ENCODE measurements at regions of chr13 and their contacts with region 1.

Region 1: GRCh38 chr13:109786457-109787134 is at the start of gene IRS2:
- DNase-seq: peak; percentile 97
- H3K4me3 ChIP-seq: peak within 1 kb of the TSS; percentile 83 to 96
- H3K27ac ChIP-seq: peak within 1 kb of the TSS; percentile 92 to 97
- H3K4me1 ChIP-seq: peaks cover 11% of the 10 kb centered on the region
- H3K27me3 ChIP-seq: no peaks in the 10 kb centered on the region
- CTCF ChIP-seq: no peak
- POLR2A ChIP-seq: peak; percentile 96
- total RNA-seq, gene IRS2: 43.5 to 54.8 TPM

Region 2: GRCh38 chr13:108961542-108962125 is 825.0 kb before region 1 on chr13:
- intact Hi-C with region 1: loop called (anchors 5 kb)
- DNase-seq: no peak
- H3K4me3 ChIP-seq: no peak overlapping the region
- H3K27ac ChIP-seq: no peak overlapping the region
- H3K4me1 ChIP-seq: no peaks in the 10 kb centered on the region
- H3K27me3 ChIP-seq: no peaks in the 10 kb centered on the region
- CTCF ChIP-seq: peak; percentile 62 to 93 (median 79)
- POLR2A ChIP-seq: no peak

Region 3: DNA sequence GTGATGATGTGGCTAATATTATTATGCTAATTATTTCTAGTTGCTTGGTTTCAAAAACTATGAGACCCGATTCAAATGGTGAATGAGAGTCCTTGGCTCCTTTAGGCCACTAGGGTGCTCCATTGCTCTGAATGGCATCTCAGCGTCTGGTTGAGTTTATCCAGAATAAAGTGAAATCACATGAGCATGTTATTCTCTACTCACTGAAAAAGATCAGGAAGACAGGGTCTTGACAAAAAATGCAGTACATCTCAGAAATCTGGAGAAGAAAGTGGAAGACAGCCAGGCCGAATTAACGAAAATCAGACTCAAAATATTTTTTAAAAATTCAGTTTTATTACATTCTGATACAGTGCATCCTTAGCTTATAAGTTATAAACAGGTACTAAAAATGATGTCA is 641.0 kb before region 1 on chr13:
- intact Hi-C with region 1: loop called (anchors 2 kb)
- DNase-seq: no peak
- H3K4me3 ChIP-seq: no peak overlapping the region
- H3K27ac ChIP-seq: no peak overlapping the region
- H3K4me1 ChIP-seq: no peaks in the 10 kb centered on the region
- H3K27me3 ChIP-seq: no peaks in the 10 kb centered on the region
- CTCF ChIP-seq: peak; percentile 36 to 79 (median 66)
- POLR2A ChIP-seq: no peak

Region 4: GRCh38 chr13:109243311-109243951 is 543.2 kb before region 1 on chr13:
- intact Hi-C with region 1: loop called (anchors 10 kb)
- DNase-seq: no peak
- H3K4me3 ChIP-seq: no peak overlapping the region
- H3K27ac ChIP-seq: peak overlapping the region in 1 of 2 donors; percentile 9
- H3K4me1 ChIP-seq: no peaks in the 10 kb centered on the region
- H3K27me3 ChIP-seq: no peaks in the 10 kb centered on the region
- CTCF ChIP-seq: no peak
- POLR2A ChIP-seq: no peak

Region 5: DNA sequence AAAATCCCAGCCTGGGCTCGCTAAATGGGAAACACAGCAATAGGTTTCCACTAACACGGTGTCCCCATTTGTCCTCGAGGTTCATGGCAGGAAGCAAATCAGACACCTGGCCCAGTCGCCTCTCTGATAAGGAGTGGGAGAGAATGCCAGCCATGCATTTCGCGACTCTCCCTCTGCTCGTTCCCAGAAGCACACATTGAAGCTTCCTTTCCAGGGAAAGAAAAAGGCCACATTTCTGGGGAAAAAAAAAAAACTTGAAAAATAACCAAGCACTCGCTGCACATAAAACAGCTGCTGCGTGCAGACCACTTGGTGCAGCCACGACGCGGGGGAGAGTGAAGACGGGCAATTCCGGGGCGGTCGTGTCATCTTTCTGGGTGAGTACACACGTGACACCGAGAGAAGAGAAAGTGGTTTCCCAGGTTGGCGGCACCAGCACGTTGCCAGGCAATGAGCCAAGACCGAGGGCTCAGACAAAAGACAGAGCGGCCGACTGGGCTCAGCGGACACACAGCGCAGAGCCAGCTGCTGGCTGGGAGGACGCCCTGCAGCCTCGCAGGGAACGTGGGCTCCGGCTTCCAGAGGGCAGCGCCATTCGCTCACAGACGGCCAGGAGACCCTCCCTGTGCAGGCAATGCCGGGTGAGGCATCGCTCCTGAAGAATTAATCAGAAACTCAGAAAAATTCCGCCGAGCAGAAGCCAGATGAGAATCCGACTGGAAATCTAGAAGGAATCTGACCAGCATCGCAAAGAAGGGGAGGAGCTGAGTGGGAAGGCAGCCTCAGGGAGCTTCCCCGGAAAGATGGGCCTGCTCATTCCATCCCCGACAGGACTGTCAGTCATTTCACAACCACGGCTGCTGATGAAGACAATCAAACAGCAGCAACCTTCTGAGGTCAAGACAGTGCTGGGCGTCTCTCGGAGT is 83.0 kb after region 1 on chr13:
- intact Hi-C with region 1: loop called (anchors 5 kb)
- DNase-seq: peak; percentile 36
- H3K4me3 ChIP-seq: peak overlapping the region; percentile 8 to 28
- H3K27ac ChIP-seq: peak overlapping the region in 1 of 2 donors; percentile 60
- H3K4me1 ChIP-seq: no peaks in the 10 kb centered on the region
- H3K27me3 ChIP-seq: no peaks in the 10 kb centered on the region
- CTCF ChIP-seq: peak in 1 of 4 experiments; percentile 39
- POLR2A ChIP-seq: no peak

Region 6: DNA sequence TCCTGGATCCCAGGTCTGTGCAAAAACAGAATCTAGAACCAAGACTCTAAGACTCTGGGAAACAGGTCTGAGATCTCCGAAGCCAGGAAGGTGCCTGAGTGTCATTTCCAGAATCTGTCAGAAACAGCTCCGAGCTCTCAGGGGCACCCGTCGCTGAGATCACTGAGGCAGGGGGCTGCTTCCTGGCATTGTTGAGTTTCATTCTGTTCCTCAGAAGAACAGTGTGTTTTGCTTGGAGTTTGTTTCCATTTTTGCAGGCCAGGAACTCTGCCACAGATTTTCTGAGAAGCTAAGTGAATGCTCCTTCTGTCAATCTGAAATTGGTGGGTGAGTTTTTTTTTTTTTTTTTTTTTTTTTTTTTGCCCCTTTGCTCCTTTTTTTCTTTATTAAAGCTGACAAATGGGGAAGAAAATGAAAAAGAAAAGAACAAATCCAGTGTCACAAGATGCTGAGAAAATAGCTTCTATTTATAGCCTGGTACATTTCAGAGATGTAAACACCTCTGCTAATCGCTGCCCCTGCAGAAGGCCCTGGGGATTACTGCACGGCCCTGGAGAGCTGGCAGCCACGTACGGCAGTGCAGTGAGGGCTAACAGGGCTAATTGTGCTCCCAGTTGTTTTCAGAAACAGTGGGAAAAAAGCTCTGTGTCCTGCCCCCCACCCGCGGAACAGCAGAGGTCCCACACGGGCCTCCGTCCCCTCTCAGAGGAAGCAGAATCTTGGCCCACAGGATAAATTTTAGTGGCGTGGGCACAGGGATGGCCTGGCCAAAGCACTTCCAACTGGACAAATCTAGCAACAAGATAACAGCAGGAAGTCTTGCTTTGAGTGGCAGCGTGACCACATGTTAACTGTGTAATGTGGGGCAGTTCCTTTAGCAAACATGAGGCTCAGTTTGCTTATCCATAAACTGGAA is 237.4 kb after region 1 on chr13:
- intact Hi-C with region 1: loop called (anchors 10 kb)
- DNase-seq: no peak
- H3K4me3 ChIP-seq: no peak overlapping the region
- H3K27ac ChIP-seq: peak overlapping the region; percentile 51 to 61
- H3K4me1 ChIP-seq: no peaks in the 10 kb centered on the region
- H3K27me3 ChIP-seq: no peaks in the 10 kb centered on the region
- CTCF ChIP-seq: no peak
- POLR2A ChIP-seq: no peak

Region 7: GRCh38 chr13:110108347-110109174 is 322.0 kb after region 1 on chr13:
- intact Hi-C with region 1: loop called (anchors 2 kb)
- DNase-seq: peak; percentile 74
- H3K4me3 ChIP-seq: no peak overlapping the region
- H3K27ac ChIP-seq: peak overlapping the region; percentile 30 to 51
- H3K4me1 ChIP-seq: no peaks in the 10 kb centered on the region
- H3K27me3 ChIP-seq: no peaks in the 10 kb centered on the region
- CTCF ChIP-seq: peak in 3 of 4 experiments; percentile 54 to 85 (median 82)
- POLR2A ChIP-seq: no peak